HEK293 (cell line): ENCODE measurements at regions of chr16 and their contacts with region 1.

Region 1: DNA sequence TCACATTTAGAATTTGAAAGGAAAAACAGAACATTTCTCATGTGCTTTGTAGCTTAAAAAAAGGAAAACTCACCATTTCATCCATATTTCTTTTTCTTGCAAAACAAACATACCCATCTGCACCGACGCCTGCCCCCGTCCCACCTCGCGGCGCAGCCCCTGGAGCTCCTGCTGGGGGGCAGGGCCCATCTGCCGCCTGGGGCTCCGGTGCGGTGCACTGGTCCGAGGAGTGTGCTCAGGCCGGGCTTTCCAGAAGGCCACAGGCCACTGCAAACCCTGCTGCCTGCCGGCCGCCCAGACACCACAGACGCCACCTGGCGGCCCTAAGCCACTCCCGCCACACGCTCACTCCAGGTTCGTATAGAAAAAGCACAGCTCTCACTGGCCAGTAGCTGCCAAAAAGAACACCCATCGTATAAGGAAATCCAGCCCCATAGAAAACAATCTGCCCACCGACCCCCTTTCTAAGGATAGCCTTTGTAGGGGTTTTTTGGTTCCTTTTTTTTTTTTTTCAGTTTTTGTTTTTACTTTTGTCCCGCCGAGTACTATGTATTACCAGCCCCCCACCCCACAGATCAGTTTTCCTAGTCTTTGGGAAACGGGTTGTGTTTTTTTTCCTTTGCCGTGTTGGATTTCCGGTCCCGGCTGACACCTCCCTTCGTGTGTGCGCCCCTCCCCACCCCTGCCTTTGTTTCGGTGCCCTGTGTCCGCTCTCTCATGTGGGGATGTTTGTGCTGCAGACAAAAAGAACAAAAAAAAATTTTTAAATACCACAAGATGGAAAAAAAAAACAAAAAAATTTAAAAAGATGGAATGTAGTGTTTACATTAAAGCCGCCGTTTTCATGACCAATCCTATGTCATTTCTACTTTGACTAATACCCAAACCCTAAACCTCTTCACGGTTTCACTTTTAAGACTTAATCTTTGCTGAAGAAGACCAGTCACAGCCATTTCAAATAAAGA is 68.8 kb downstream of the AMFR start:
- H3K4me3 ChIP-seq: peak overlapping the region; percentile 18
- H3K27ac ChIP-seq: no peak overlapping the region
- H3K4me1 ChIP-seq: peaks cover 4% of the 10 kb centered on the region
- CTCF ChIP-seq: peak; percentile 97

Region 2: DNA sequence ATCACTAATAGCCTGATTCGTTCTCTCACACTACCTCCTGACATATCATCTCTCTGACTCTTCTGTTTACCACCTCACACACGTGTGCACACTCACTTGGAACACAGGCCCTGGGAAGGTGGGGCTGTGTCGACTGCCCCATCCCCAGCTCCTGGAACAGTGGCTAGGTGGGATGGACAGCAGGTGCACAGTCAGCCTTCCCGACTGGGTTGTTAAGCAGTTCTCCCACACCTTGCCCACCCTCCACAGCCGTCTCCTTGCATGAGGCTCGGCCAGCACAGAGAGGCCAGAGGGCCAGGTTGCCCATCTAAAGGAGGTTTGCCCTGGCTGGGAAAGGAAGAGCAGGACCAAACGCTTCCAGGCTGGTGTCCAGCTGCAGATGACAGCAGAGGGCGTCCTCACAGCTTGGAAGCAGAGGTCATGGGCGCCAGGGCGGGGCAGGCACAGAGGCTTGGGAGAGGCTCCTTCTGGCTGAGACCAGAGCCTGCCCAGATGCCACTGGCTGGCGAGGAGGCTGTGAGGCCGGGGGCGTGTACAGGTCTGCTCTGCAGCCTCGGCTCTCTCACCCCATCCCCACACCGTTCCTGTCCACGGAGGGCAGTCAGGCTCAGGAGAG is 24.0 kb before region 1 on chr16:
- CTCF ChIA-PET with region 1: interaction called, 14 read pairs
- POLR2A ChIA-PET with region 1: interaction called, 3 read pairs
- H3K4me3 ChIP-seq: no peak overlapping the region
- H3K27ac ChIP-seq: no peak overlapping the region
- H3K4me1 ChIP-seq: no peaks in the 10 kb centered on the region
- CTCF ChIP-seq: no peak

Region 3: GRCh38 chr16:56341656-56342399 is 14.7 kb before region 1 on chr16:
- CTCF ChIA-PET with region 1: interaction called, 25 read pairs
- POLR2A ChIA-PET with region 1: no interaction called
- H3K4me3 ChIP-seq: no peak overlapping the region
- H3K27ac ChIP-seq: no peak overlapping the region
- H3K4me1 ChIP-seq: no peaks in the 10 kb centered on the region
- CTCF ChIP-seq: no peak

Region 4: DNA sequence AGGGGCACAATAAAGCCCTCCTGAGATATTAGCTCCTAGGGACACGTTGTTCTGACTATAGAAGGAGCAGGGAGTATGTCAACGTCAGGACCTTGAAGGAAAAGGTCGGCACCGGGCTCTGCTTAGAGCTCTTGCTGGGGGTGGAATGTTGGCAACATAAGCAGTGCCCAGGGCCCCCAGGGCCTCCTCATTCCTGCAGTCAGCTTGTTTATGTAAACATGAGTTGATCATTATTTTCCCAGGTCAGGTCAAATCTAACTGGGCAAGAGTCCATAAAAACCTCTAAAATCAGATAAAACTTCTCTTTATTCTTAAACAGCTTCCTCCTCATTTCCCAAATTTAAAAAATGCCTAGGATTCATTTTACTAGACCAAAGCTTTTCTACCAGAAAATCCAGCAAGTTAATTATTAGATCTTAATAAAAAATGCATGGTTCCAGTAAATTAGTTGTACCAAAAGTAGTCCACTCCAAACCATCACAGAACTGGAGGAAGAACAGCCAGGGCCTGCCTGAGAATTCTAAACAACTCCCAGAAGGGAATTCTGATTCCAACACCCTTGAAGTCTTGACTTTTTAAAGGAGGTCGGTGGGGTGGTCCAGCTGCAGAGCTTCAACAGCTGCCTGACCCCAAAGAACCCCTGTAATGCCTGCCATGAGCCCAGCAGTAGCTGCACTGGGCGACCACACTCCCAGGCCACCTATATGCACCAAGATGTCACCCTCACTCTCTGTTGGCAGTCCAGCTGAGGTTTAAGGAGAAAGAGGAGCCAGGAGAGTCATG is 14.5 kb after region 1 on chr16:
- CTCF ChIA-PET with region 1: interaction called, 35 read pairs
- POLR2A ChIA-PET with region 1: interaction called, 3 read pairs
- H3K4me3 ChIP-seq: no peak overlapping the region
- H3K27ac ChIP-seq: peak overlapping the region; percentile 34; the same call in 1 of the 2 replicates
- H3K4me1 ChIP-seq: peaks cover 28% of the 10 kb centered on the region
- CTCF ChIP-seq: no peak

Region 5: GRCh38 chr16:56382901-56383355 is 26.4 kb after region 1 on chr16:
- CTCF ChIA-PET with region 1: interaction called, 11 read pairs
- POLR2A ChIA-PET with region 1: interaction called, 7 read pairs
- H3K4me3 ChIP-seq: no peak overlapping the region
- H3K27ac ChIP-seq: no peak overlapping the region
- H3K4me1 ChIP-seq: no peaks in the 10 kb centered on the region
- CTCF ChIP-seq: no peak